K562 (cell line): ENCODE measurements at regions of chr2 and their contacts with region 1.

Region 1: DNA sequence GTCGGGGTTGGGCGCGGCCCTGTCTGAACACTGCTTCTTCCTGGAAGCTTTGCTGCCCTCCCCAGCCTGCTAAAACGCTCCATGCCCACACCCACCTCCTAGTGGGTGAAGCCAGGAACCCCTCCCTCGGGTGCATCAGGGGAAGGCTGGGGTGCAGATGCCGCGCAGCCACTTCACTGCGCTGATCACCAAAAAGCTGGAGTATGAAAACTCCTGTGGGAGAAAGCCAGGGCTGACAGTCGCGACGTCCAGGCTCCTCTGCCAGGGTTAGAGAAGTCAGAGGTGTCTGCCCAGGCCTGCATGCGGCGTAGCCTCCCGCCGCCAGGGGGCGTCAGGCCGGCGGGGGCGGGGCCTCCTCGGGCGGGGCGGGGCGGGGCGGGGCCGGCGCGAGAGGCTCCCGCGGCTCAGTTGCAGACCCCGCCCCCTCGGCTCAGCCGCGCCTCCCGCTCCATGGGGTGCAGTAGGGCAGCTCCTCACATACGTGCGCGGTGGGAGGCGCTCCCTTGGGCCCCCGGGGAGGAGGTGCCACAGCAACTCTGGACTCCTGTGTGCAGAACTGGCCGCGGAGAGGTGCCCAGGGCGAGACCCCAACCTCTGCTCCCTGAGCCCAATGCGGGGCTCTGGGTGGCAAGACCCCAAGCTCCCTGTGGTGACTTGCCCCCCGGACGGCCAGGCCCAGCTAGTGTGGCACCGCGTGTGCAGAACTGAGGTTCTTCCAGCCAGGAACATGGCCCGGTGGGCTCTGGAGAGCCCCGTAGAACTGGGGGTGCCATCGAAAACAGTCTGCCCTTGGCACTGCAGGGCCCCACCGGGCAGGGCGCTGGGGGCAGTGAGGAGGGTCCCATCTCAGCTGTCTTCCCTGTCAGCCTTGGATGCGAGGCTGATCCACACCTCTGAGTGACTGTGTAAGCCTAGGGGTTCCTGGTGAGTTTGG is 1.8 kb upstream of the RNPEPL1 start:
- DNase-seq: peak; percentile 71 to 93 (median 79)
- ATAC-seq: peak; percentile 80
- H3K4me3 ChIP-seq: peak overlapping the region; percentile 65
- H3K27ac ChIP-seq: peak overlapping the region; percentile 98
- H3K4me1 ChIP-seq: peaks cover 40 to 77% of the 10 kb centered on the region in 2 experiments
- H3K27me3 ChIP-seq: no peaks in the 10 kb centered on the region
- CTCF ChIP-seq: peak; percentile 47 to 66 (median 51); a peak in 5 of 6 replicates
- EP300 ChIP-seq: no peak
- POLR2A ChIP-seq: peak; percentile 70
- RAD21 ChIP-seq: no peak

Region 2: DNA sequence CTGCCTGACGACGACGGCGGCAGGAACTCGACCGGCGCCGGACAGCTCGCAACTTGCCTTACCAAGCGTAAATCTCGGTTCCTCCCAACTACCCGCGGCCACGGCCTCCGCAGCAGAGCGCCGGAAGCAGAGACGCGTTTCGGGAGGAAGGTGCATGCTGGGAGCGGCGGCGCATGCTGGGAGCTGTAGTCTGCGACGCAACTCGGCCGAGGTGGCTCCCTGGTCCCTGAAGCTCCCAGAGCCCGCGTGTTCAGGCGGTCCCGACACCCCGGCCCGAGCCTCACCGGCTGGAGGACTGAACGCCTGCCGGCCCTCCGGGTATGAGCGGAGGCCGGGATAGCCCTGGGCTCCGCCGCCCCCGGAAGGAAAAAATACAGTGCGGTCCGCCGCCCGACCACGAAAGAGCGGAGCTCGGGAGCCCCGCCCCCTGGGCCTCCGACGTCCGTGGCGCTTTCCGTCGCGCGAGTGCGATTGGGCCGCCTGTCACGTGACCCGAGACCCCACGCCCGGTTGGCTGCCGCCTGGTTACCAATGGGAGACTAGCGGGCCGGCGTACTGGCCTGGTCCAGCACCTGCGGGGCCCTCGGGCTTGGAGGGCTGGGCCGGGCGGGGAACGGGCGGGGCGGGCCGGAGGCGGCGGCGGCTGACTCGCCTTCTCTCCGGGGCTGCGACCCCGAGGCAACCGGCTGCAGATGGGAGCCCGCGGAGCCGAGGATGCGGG is 19.9 kb after region 1 on chr2 and contains the start of gene CAPN10:
- CTCF ChIA-PET with region 1: no interaction called
- POLR2A ChIA-PET with region 1: interaction called, 26 read pairs
- in situ Hi-C with region 1: no loop called
- intact Hi-C with region 1: loop called (anchors 1 kb)
- DNase-seq: peak; percentile 90 to 94 (median 92)
- ATAC-seq: peak; percentile 89
- H3K4me3 ChIP-seq: peak within 1 kb of the TSS; percentile 92
- H3K27ac ChIP-seq: peak within 1 kb of the TSS; percentile 87; the same call in 2 of the 3 replicates
- H3K4me1 ChIP-seq: peaks cover 31 to 51% of the 10 kb centered on the region in 2 experiments
- H3K27me3 ChIP-seq: no peaks in the 10 kb centered on the region
- CTCF ChIP-seq: no peak
- EP300 ChIP-seq: no peak
- POLR2A ChIP-seq: peak; percentile 79
- RAD21 ChIP-seq: no peak
- polyA plus RNA-seq, gene CAPN10: 0.08 to 0.41 TPM

Region 3: DNA sequence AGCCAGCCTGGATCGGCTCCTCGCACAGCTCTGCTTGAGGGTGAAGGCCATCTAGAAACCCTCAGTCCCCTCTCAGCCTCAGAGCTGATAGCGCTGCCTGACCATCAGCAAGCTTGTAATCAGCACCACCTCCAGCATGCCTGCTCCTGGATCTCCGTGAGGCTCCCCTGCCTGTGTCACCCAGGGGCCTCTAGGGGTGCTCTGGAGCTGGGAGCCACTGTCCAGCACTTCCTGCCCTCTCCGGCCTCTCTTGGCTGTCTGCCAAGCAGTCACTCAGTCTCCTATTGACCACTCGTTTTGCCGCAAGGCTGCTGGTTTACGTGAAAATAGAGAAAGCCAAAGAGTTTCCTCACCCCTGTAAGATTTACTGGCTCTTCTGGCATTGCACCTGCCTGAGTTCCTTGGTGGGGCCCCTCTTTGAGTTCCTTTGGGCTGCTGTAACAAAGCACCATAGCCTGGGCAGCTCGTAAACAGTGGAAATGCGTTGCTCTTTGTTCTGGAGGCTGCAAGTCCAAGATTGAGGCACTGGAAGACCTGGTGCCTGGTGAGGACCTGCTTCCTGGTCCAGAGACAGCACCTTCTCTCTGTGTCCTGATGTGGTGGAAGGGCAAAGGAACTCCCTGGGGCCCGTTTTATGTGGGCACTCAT is 37.9 kb after region 1 on chr2:
- CTCF ChIA-PET with region 1: no interaction called
- POLR2A ChIA-PET with region 1: interaction called, 3 read pairs
- in situ Hi-C with region 1: no loop called
- intact Hi-C with region 1: loop called (anchors 1 kb)
- DNase-seq: peak; percentile 88 to 93 (median 90)
- ATAC-seq: peak; percentile 100
- H3K4me3 ChIP-seq: no peak overlapping the region
- H3K27ac ChIP-seq: peak overlapping the region; percentile 42; the same call in 1 of the 3 replicates
- H3K4me1 ChIP-seq: peaks cover 4 to 29% of the 10 kb centered on the region in 2 experiments; a peak in 3 of 5 replicates
- H3K27me3 ChIP-seq: no peaks in the 10 kb centered on the region
- CTCF ChIP-seq: peak; percentile 86 to 92 (median 91)
- EP300 ChIP-seq: peak; percentile 17; the same call in 1 of the 2 replicates
- POLR2A ChIP-seq: no peak
- RAD21 ChIP-seq: peak; percentile 65 to 74